AG04449 (cell line): ENCODE measurements at regions of chr6 and their contacts with region 1.

Region 1: DNA sequence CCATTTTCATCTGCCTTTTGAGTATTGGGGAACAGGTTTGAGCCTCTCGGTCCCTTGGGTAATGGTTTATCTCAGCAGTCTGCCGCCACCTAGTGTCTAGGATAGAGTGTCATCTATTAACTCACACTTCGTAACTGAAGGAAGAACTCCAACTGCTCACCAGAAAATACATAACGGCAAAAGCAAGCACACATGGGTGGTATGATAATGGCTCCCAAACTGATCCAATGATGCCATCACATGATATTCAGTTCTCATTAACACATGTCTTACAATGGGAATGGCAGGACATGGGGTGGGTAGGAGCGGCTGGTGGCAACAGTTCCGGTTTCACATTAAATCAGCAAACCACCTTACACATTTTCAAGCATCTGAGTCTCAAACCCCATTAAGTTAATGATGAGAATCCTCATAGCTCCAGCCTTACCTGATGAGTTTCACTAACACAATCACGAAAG is 110.7 kb upstream of the PHACTR1 start:
- DNase-seq: no peak
- H3K4me3 ChIP-seq: no peak overlapping the region
- CTCF ChIP-seq: peak; percentile 65

Region 2: DNA sequence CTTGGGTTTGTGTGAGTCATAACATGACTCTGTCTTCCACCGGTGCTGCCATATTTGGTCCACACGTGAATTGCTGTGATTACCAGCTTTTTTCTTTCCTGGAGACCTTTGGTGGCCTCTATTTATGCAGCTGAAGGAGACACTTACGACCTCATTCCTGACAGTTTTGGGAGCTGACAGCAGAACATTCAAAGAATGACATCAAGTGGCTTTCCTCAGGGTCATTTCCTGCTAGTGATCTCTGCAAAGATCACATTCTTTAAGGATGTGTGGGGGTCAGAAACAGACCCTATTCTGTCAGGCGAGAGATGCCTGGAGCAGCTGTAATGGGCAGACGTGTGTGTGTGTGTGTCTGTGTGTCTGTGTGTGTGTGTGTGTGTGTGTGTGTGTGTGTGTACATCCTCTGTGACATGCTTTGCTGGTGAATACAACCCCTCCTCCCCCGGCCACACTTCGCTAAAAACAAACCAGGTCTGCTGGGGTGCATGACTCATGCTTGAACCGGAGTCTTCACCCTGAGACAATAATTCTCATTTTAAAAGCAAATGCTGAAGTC is 952.8 kb before region 1 on chr6:
- CTCF ChIA-PET with region 1: interaction called, 21 read pairs
- POLR2A ChIA-PET with region 1: no interaction called
- DNase-seq: peak; percentile 90
- H3K4me3 ChIP-seq: no peak overlapping the region
- CTCF ChIP-seq: no peak

Region 3: DNA sequence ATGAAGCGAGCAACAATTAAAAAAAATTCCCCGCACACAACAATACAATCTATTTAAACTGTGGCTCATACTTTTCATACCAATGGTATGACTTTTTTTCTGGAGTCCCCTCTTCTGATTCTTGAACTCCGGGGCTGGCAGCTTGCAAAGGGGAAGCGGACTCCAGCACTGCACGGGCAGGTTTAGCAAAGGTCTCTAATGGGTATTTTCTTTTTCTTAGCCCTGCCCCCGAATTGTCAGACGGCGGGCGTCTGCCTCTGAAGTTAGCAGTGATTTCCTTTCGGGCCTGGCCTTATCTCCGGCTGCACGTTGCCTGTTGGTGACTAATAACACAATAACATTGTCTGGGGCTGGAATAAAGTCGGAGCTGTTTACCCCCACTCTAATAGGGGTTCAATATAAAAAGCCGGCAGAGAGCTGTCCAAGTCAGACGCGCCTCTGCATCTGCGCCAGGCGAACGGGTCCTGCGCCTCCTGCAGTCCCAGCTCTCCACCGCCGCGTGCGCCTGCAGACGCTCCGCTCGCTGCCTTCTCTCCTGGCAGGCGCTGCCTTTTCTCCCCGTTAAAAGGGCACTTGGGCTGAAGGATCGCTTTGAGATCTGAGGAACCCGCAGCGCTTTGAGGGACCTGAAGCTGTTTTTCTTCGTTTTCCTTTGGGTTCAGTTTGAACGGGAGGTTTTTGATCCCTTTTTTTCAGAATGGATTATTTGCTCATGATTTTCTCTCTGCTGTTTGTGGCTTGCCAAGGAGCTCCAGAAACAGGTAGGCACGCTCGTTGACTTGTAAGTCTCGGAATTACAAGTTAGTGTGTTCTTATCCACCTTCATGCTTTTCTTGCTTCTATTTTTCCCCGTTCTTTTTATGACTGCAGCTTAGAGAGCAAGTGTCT is 315.7 kb before region 1 on chr6 and contains the start of gene EDN1:
- CTCF ChIA-PET with region 1: interaction called, 281 read pairs
- POLR2A ChIA-PET with region 1: interaction called, 4 read pairs
- DNase-seq: no peak
- H3K4me3 ChIP-seq: peak within 1 kb of the TSS; percentile 62
- CTCF ChIP-seq: peak; percentile 70

Region 4: DNA sequence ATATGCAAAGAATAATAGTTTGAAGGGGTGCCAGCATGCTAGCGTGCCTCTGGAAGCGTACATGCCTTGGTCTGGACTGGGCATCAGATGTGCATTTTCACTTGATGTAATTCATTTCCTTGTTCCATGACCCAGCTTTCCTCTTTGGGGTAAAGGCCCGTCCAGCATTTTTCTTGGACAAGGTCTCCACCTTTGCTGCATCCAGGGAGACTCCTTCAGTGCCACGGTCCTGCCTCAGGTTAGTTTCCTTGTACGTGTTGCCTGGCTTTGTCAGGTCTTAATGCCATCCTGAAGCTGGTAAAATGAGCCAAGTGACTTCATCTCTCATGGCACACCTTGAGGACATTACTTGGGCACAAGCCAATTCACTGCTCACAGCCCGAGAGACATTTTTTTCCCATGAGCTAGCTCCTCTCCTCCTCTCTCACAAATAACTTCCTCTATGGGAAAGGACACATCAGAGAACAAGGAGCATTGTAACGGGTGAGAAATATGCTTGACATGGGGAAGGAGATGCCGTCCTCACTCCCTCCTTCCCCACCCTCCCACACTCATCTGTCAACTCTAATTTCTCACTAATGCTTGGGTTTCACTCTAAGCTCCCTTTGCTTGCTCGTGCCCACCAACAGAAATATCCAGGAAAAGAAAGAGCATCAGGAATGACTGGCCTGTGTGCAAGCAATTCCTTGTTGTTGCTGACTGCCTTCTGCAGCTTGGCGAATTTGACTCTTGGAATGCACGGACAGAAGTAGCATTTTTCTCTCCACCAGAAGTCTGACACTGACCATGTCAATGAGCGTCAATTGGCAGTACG is 291.7 kb before region 1 on chr6:
- CTCF ChIA-PET with region 1: interaction called, 16 read pairs
- POLR2A ChIA-PET with region 1: no interaction called
- DNase-seq: no peak
- H3K4me3 ChIP-seq: no peak overlapping the region
- CTCF ChIP-seq: no peak

Region 5: GRCh38 chr6:12395898-12396297 is 210.0 kb before region 1 on chr6:
- CTCF ChIA-PET with region 1: interaction called, 45 read pairs
- POLR2A ChIA-PET with region 1: no interaction called
- DNase-seq: no peak
- H3K4me3 ChIP-seq: no peak overlapping the region
- CTCF ChIP-seq: peak; percentile 17

Region 6: GRCh38 chr6:12420626-12421025 is 185.3 kb before region 1 on chr6:
- CTCF ChIA-PET with region 1: interaction called, 12 read pairs
- POLR2A ChIA-PET with region 1: no interaction called
- DNase-seq: peak; percentile 36
- H3K4me3 ChIP-seq: no peak overlapping the region
- CTCF ChIP-seq: no peak

Region 7: GRCh38 chr6:12595161-12595811 is 10.6 kb before region 1 on chr6:
- CTCF ChIA-PET with region 1: interaction called, 44 read pairs
- POLR2A ChIA-PET with region 1: no interaction called
- DNase-seq: no peak
- H3K4me3 ChIP-seq: no peak overlapping the region
- CTCF ChIP-seq: no peak